PC-9 (cell line): ENCODE measurements at regions of chr14 and their contacts with region 1.

Region 1: GRCh38 chr14:77028384-77029231 is at the start of gene IRF2BPL:
- DNase-seq: peak; percentile 97 to 100
- H3K4me3 ChIP-seq: peak within 1 kb of the TSS; percentile 64
- H3K27ac ChIP-seq: peak within 1 kb of the TSS; percentile 88
- H3K4me1 ChIP-seq: peaks cover 54% of the 10 kb centered on the region
- H3K27me3 ChIP-seq: no peaks in the 10 kb centered on the region
- CTCF ChIP-seq: no peak
- total RNA-seq, gene IRF2BPL: 74.6 and 84.5 TPM in 2 replicates

Region 2: DNA sequence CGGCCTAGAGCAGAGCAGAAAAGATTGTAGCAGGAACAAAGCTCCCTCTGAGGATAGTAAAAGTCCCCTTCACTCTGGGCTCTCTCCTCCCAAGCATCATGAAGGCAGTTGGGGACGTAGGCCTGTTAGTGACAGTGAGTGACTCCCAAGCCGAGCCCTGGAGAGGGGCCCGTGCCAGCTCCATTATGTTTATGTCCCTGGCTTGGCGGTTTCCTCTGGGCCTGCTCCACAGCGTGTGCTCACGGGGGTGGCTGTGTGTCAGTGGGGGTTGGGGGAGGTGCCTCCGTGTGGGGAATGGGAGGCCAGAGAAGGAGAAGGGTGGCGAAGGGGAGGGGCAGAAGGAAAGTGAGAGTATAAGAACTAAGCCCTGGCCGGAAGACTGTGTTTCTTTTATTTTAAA is 437.3 kb before region 1 on chr14:
- CTCF ChIA-PET with region 1: no interaction called
- POLR2A ChIA-PET with region 1: no interaction called
- intact Hi-C with region 1: no loop called
- DNase-seq: no peak
- H3K4me3 ChIP-seq: no peak overlapping the region
- H3K27ac ChIP-seq: no peak overlapping the region
- H3K4me1 ChIP-seq: no peaks in the 10 kb centered on the region
- H3K27me3 ChIP-seq: peaks cover 86% of the 10 kb centered on the region
- CTCF ChIP-seq: no peak

Region 3: DNA sequence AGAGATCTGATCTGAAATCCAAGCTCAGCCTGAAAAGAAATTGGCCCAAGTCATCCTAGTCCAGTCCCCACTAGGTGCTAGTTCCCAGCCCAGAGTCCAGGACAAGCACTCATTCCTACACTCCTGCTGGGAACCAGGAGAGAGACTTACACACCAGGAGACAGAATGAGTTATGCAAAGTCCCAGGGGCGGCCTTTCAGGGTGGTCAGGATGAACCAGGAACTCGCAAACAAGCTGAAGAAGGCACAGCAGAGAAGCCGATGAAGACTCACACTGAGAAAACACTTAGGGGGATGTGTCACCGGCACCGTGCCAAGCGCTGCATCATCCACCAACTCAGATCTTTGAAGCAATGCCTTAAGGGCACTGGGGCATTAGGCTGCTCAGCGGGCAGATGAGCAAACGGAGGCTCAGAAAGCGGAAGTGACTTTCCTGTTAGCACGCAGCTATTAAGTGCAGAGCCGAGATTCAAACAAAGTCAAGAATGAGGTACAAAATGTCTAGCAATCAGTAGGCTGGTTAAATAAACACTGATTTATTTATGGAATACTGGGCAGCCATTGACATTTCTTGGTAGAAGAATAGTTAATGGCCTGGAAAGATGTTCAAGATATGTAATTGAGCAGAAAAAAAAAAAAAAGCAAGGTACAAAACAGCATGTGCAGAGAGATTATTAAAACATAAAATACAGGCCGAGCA is 123.7 kb before region 1 on chr14:
- CTCF ChIA-PET with region 1: no interaction called
- POLR2A ChIA-PET with region 1: interaction called, 5 read pairs
- intact Hi-C with region 1: loop called (anchors 2 kb)
- DNase-seq: peak; percentile 98 to 100
- H3K4me3 ChIP-seq: peak overlapping the region; percentile 9; the same call in 1 of the 2 replicates
- H3K27ac ChIP-seq: peak overlapping the region; percentile 80
- H3K4me1 ChIP-seq: peaks cover 34% of the 10 kb centered on the region
- H3K27me3 ChIP-seq: no peaks in the 10 kb centered on the region
- CTCF ChIP-seq: no peak

Region 4: GRCh38 chr14:76947078-76947837 is 81.3 kb before region 1 on chr14:
- CTCF ChIA-PET with region 1: interaction called, 11 read pairs
- POLR2A ChIA-PET with region 1: interaction called, 11 read pairs
- intact Hi-C with region 1: loop called (anchors 1 kb)
- DNase-seq: peak; percentile 95 to 100
- H3K4me3 ChIP-seq: peak overlapping the region; percentile 15; the same call in 1 of the 2 replicates
- H3K27ac ChIP-seq: peak overlapping the region; percentile 93
- H3K4me1 ChIP-seq: peaks cover 81% of the 10 kb centered on the region
- H3K27me3 ChIP-seq: no peaks in the 10 kb centered on the region
- CTCF ChIP-seq: peak; percentile 59; the same call in 1 of the 2 replicates

Region 5: GRCh38 chr14:77014004-77014604 is 14.5 kb before region 1 on chr14:
- CTCF ChIA-PET with region 1: interaction called, 13 read pairs
- POLR2A ChIA-PET with region 1: interaction called, 18 read pairs
- intact Hi-C with region 1: loop called (anchors 2 kb)
- DNase-seq: peak; percentile 42 to 85
- H3K4me3 ChIP-seq: no peak overlapping the region
- H3K27ac ChIP-seq: no peak overlapping the region
- H3K4me1 ChIP-seq: peaks cover 40% of the 10 kb centered on the region
- H3K27me3 ChIP-seq: no peaks in the 10 kb centered on the region
- CTCF ChIP-seq: no peak

Region 6: GRCh38 chr14:77067632-77068514 is 39.3 kb after region 1 on chr14:
- CTCF ChIA-PET with region 1: interaction called, 11 read pairs
- POLR2A ChIA-PET with region 1: interaction called, 4 read pairs
- intact Hi-C with region 1: loop called (anchors 1 kb)
- DNase-seq: peak; percentile 74 to 93
- H3K4me3 ChIP-seq: no peak overlapping the region
- H3K27ac ChIP-seq: no peak overlapping the region
- H3K4me1 ChIP-seq: peaks cover 54% of the 10 kb centered on the region
- H3K27me3 ChIP-seq: no peaks in the 10 kb centered on the region
- CTCF ChIP-seq: peak; percentile 100

Region 7: DNA sequence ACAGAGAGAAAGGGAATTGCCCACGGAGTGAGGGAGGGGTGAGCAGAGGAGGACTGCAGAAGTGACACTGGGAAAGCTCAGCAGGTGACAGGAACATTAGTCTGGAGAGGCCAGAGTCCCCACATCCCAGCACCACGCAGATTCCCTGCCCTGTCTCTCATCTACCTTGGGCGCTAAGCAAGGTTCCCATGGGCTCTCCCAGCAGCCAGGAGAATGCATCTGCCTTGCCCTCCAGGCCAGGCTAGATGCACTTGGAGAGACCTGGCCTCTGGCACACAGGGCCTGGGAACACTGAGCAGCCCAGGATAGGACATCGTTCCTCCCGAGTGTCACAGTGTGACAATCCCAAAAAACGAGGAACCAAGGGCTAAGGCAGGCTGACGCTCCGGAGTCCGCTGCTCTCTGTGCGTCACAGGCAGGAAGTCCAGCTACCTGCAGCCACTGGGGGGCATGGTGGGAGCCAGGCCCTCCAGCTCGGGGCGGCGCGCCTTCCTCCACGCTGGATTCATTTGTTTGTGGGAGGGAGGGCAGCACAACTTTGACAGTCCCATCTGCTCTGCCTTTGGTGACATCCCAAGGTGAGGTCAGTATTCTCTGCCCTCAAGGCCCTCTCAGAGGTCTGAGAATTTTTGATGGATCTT is 247.8 kb after region 1 on chr14:
- CTCF ChIA-PET with region 1: interaction called, 15 read pairs
- POLR2A ChIA-PET with region 1: no interaction called
- intact Hi-C with region 1: no loop called
- DNase-seq: no peak
- H3K4me3 ChIP-seq: no peak overlapping the region
- H3K27ac ChIP-seq: no peak overlapping the region
- H3K4me1 ChIP-seq: no peaks in the 10 kb centered on the region
- H3K27me3 ChIP-seq: no peaks in the 10 kb centered on the region
- CTCF ChIP-seq: no peak